Ascending aorta (tissue), 2 donors: ENCODE measurements at regions of chr1 and their contacts with region 1.

Region 1: DNA sequence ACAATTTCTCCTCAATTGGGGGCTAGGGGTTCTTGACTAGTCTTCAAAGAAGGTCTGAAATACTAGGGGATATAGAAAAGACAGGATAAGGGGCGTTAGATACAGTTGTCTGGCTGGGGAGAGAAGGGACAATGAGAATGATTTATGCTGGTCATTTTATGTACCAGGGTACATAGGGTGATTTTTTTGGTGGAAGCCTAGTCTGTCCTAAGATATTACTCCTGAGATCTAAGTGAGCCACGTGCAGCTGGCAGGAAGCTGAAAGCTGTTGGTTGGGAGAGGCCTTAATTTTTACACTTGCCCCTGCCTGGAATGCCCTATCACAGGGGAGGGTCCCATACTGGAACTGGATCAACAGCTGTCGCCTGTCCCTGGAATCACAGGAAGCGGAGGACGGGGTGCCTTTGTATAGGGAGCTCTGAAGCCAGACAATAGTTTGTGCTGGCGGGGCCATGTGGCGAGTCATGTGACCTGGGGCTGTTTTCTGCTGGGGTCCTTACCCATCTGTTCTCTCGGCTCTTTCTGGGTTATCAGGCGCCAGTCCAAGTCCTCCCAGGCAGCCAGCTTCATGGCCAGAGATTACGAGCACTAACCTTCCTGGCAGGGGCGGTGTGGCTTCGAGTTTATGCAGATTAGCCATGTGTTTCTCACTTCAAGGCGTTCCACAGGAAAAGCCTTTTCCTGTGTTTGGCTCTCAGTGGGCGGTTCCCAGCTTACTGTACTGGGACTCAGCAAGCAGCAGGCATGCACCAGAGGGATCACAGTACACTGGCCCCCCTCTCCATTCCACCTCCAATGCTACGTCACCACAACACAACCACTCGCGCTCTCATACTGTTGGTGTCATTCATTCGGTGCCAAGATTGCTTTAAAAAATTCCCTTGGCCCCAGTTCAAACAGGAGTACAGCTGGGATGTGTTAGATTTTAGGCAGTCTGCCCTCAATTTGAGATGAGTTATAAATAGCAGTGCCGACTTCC is 27.5 kb downstream of the ARID1A start:
- DNase-seq: peak; percentile 56 to 92
- H3K4me3 ChIP-seq: peak overlapping the region in 1 of 2 donors; percentile 29
- H3K27ac ChIP-seq: peak overlapping the region; percentile 69 to 70
- H3K4me1 ChIP-seq: peaks cover 15 to 81% of the 10 kb centered on the region in 2 donors
- H3K27me3 ChIP-seq: no peaks in the 10 kb centered on the region
- CTCF ChIP-seq: no peak

Region 2: DNA sequence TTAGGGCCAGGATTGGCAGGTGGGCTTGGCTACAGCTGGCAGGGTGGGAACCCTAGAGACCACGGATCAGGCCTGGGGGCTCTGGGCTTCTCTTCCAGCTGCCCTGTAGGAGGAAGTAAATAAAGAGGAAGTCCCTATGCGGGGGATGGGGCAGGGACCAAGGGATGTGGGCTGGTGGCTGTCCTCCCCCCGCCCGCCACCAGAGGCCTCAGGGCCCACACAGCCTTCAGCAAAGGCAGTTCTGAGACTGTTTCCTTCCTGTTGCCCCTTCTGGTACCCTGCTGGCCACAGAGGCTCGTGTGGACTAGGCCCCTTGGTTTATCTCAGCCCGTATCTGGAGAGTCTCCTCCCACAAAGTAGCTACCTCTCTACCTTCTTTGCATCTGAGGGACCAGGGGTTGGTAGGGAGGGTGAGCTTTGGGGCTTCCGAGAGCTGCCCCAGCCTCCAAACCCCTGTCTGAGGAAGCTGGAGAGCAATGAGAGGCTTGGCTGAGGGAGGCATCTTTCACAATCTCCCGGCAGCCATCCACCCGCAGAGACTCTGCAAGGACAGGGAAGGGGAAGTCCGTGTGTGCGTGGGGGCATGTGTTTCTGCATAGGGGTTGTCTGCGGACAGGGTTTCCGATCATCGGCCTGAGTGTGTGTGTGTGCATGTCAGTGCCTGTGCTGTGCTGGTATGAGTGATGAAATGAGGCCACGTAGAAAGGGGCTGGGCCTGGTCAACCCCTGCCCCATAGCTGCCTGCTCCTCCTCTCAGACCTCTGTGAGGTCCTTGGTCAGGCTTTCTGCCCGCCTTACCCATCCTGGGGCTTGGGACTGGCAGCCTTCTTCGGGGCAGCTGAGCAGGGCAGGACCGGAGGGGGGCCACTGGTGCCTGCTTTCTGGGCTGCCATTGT is 181.2 kb before region 1 on chr1:
- intact Hi-C with region 1: no loop called
- DNase-seq: peak; percentile 81 to 90
- H3K4me3 ChIP-seq: no peak overlapping the region
- H3K27ac ChIP-seq: peak overlapping the region; percentile 53 to 63
- H3K4me1 ChIP-seq: no peaks in the 10 kb centered on the region
- H3K27me3 ChIP-seq: no peaks in the 10 kb centered on the region
- CTCF ChIP-seq: peak in 2 of 3 experiments; percentile 11 to 41

Region 3: DNA sequence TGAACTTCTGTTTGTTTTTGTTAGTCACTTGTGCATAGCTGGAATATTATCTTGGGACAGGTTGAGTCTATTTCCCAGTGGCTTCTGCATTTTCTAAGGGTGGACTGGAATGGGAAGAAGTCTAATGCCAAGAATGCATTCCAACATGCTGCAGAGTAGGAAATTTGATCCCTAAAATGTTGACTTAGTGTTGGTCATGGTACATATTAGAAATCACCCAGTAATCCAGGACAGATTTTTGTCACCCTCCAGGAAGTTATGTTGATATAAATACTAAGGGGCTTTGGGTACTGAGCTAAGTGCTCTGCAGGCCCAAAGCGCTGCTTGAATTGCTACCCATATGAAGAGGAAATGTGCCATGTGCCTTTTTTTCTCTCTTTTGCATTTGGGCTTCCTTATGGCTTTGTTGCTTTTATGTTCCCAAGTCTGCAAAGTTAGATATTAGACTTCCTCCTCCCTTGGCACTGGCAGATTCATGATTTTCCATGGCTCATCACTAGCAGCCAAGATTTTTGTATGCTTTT is 17.5 kb before region 1 on chr1:
- intact Hi-C with region 1: loop called (anchors 2 kb)
- DNase-seq: no peak
- H3K4me3 ChIP-seq: peak overlapping the region; percentile 3 to 39
- H3K27ac ChIP-seq: peak overlapping the region; percentile 62 to 81
- H3K4me1 ChIP-seq: peaks cover 26 to 81% of the 10 kb centered on the region in 2 donors
- H3K27me3 ChIP-seq: no peaks in the 10 kb centered on the region
- CTCF ChIP-seq: no peak

Region 4: DNA sequence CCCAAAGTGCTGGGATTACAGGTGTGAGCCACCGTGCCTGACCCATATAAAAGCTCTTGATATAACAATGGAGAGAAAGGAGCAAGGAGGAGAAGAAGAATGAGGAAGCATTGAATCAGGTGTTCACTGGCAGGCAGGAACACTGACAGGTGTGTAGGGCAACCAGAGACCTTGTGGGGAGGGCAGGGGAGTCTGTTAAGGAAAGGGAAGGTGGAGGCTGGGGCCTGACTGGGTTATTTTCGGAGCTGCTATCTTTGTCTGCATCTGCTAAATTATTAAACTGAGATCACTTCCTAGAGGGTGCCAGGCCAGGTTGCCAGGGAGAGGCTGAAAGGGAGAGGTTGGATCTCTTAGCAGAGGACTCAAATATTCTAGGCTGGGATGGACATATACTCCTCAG is 263.4 kb after region 1 on chr1:
- intact Hi-C with region 1: no loop called
- DNase-seq: no peak
- H3K4me3 ChIP-seq: no peak overlapping the region
- H3K27ac ChIP-seq: no peak overlapping the region
- H3K4me1 ChIP-seq: no peaks in the 10 kb centered on the region
- H3K27me3 ChIP-seq: no peaks in the 10 kb centered on the region
- CTCF ChIP-seq: no peak